HepG2 (cell line): ENCODE measurements at regions of chr14 and their contacts with region 1.

Region 1: DNA sequence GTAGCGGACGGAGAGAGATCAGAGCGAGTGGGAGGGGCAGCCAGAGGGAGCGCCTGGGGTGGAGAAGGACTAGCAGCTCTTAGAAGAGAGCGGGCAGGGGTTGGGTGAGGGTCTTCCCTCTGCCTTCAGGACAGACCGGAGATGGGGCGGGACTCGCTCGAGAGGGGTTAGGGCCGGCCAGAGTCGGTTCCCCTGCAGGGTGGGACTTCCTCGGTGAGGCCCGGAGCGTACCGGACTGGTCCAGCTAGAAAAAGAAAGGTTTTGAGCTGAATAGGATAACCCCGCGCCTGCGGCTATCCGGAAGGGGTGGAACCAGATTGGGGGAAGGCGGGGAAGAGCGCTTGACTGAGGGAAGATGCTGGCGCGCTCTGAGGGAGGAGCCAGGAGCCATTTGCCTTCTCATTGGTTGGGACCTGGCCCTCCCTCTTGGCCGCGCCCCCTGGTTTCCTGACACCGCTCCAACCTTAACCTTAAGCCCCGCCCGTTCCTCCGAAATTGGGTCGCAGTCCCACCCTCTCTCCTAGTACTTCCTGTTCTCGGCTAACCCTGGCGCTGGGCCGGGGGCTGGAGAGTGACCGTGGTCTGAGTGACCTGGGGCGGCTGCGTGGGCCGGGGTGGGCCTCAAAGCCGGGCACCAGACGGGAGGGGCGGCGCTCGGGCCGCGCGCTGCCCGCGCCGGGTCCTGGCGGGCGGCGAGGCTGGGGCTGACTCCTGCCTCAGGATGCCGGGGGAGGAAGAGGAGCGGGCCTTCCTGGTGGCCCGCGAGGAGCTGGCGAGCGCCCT is at the start of gene RNF31:
- DNase-seq: peak; percentile 100
- ATAC-seq: peak; percentile 90
- H3K4me3 ChIP-seq: peak within 1 kb of the TSS; percentile 91 to 100 (median 96)
- H3K27ac ChIP-seq: peak within 1 kb of the TSS; percentile 76
- H3K4me1 ChIP-seq: peaks cover 59% of the 10 kb centered on the region
- H3K27me3 ChIP-seq: peaks cover 0 to 3% of the 10 kb centered on the region in 2 experiments; a peak in 1 of 5 replicates
- CTCF ChIP-seq: no peak; the same call in 1 of the 2 replicates
- EP300 ChIP-seq: no peak
- POLR2A ChIP-seq: peak in 1 of 2 experiments; percentile 67; a peak in 2 of 4 replicates
- RAD21 ChIP-seq: peak; percentile 39
- total RNA-seq, gene RNF31: 65.9 and 86.8 TPM in 2 replicates

Region 2: GRCh38 chr14:23640524-23641141 is 506.5 kb before region 1 on chr14:
- CTCF ChIA-PET with region 1: no interaction called
- POLR2A ChIA-PET with region 1: interaction called, 10 read pairs
- in situ Hi-C with region 1: no loop called
- intact Hi-C with region 1: no loop called
- DNase-seq: peak; percentile 54
- ATAC-seq: no peak
- H3K4me3 ChIP-seq: peak overlapping the region in 1 of 3 experiments; percentile 74; a peak in 1 of 6 replicates
- H3K27ac ChIP-seq: peak overlapping the region; percentile 59
- H3K4me1 ChIP-seq: peaks cover 65% of the 10 kb centered on the region
- H3K27me3 ChIP-seq: no peaks in the 10 kb centered on the region; a peak in 1 of 5 replicates
- CTCF ChIP-seq: no peak
- EP300 ChIP-seq: no peak
- POLR2A ChIP-seq: peak in 1 of 2 experiments; percentile 77; a peak in 2 of 4 replicates
- RAD21 ChIP-seq: no peak

Region 3: GRCh38 chr14:24071144-24071697 is 75.9 kb before region 1 on chr14 and contains the start of gene CPNE6:
- CTCF ChIA-PET with region 1: no interaction called
- POLR2A ChIA-PET with region 1: no interaction called
- in situ Hi-C with region 1: no loop called
- intact Hi-C with region 1: no loop called
- DNase-seq: no peak
- ATAC-seq: no peak
- H3K4me3 ChIP-seq: no peak within 1 kb of the TSS
- H3K27ac ChIP-seq: no peak within 1 kb of the TSS
- H3K4me1 ChIP-seq: peaks cover 55% of the 10 kb centered on the region
- H3K27me3 ChIP-seq: peaks cover 13 to 56% of the 10 kb centered on the region in 2 experiments; a peak in 4 of 5 replicates
- CTCF ChIP-seq: no peak
- EP300 ChIP-seq: no peak
- POLR2A ChIP-seq: no peak
- RAD21 ChIP-seq: no peak
- total RNA-seq, gene CPNE6: not detected in 2 replicates

Region 4: DNA sequence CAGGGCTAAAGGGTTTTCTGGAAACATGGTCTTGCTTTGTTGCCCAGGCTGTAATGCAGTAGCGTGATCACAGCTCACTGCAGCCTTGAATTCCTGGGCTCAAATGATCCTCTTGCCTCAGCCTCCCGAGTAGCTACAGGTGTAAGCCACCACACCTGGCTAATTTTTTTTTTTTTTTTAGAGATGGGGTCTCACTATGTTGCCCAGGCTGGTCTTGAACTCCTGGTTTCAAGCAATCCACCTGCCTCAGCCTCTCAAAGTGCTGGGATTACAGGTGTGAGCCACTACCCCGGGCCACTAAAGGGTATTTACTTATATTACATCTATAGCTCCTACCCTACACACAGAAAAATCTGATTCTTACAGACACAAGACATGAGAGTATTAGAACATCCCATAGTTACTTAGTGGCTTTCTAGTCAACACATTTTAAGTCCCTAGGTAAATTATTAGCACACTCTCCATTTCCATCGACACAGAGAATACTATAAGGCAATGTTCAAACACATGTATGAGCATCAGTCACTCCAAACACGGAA is 38.8 kb before region 1 on chr14:
- CTCF ChIA-PET with region 1: no interaction called
- POLR2A ChIA-PET with region 1: interaction called, 977 read pairs
- in situ Hi-C with region 1: no loop called
- intact Hi-C with region 1: no loop called
- DNase-seq: no peak
- ATAC-seq: no peak
- H3K4me3 ChIP-seq: no peak overlapping the region
- H3K27ac ChIP-seq: no peak overlapping the region
- H3K4me1 ChIP-seq: peaks cover 60% of the 10 kb centered on the region
- H3K27me3 ChIP-seq: no peaks in the 10 kb centered on the region
- CTCF ChIP-seq: no peak
- EP300 ChIP-seq: no peak
- POLR2A ChIP-seq: no peak
- RAD21 ChIP-seq: no peak

Region 5: GRCh38 chr14:24171422-24172260 is 24.5 kb after region 1 on chr14 and contains the start of gene REC8:
- CTCF ChIA-PET with region 1: no interaction called
- POLR2A ChIA-PET with region 1: interaction called, 13 read pairs
- in situ Hi-C with region 1: no loop called
- intact Hi-C with region 1: no loop called
- DNase-seq: no peak
- ATAC-seq: peak; percentile 15
- H3K4me3 ChIP-seq: no peak within 1 kb of the TSS
- H3K27ac ChIP-seq: no peak within 1 kb of the TSS
- H3K4me1 ChIP-seq: no peaks in the 10 kb centered on the region
- H3K27me3 ChIP-seq: no peaks in the 10 kb centered on the region
- CTCF ChIP-seq: no peak
- EP300 ChIP-seq: no peak
- POLR2A ChIP-seq: peak in 1 of 2 experiments; percentile 16; a peak in 1 of 4 replicates
- RAD21 ChIP-seq: no peak
- total RNA-seq, gene REC8: 3.4 TPM in 1 of 2 replicates, not detected in the other

Region 6: GRCh38 chr14:24195191-24196070 is 48.3 kb after region 1 on chr14 and contains the start of gene TM9SF1:
- CTCF ChIA-PET with region 1: no interaction called
- POLR2A ChIA-PET with region 1: interaction called, 38 read pairs
- in situ Hi-C with region 1: no loop called
- intact Hi-C with region 1: no loop called
- DNase-seq: peak; percentile 93
- ATAC-seq: peak; percentile 94
- H3K4me3 ChIP-seq: peak within 1 kb of the TSS; percentile 79 to 91 (median 85)
- H3K27ac ChIP-seq: peak within 1 kb of the TSS; percentile 84
- H3K4me1 ChIP-seq: peaks cover 65% of the 10 kb centered on the region
- H3K27me3 ChIP-seq: no peaks in the 10 kb centered on the region; a peak in 1 of 5 replicates
- CTCF ChIP-seq: peak; percentile 54
- EP300 ChIP-seq: peak; percentile 7 to 39; a peak in 1 of 4 replicates
- POLR2A ChIP-seq: peak in 1 of 2 experiments; percentile 81; a peak in 2 of 4 replicates
- RAD21 ChIP-seq: peak; percentile 52
- total RNA-seq, gene TM9SF1: 56.4 and 110 TPM in 2 replicates

Region 7: DNA sequence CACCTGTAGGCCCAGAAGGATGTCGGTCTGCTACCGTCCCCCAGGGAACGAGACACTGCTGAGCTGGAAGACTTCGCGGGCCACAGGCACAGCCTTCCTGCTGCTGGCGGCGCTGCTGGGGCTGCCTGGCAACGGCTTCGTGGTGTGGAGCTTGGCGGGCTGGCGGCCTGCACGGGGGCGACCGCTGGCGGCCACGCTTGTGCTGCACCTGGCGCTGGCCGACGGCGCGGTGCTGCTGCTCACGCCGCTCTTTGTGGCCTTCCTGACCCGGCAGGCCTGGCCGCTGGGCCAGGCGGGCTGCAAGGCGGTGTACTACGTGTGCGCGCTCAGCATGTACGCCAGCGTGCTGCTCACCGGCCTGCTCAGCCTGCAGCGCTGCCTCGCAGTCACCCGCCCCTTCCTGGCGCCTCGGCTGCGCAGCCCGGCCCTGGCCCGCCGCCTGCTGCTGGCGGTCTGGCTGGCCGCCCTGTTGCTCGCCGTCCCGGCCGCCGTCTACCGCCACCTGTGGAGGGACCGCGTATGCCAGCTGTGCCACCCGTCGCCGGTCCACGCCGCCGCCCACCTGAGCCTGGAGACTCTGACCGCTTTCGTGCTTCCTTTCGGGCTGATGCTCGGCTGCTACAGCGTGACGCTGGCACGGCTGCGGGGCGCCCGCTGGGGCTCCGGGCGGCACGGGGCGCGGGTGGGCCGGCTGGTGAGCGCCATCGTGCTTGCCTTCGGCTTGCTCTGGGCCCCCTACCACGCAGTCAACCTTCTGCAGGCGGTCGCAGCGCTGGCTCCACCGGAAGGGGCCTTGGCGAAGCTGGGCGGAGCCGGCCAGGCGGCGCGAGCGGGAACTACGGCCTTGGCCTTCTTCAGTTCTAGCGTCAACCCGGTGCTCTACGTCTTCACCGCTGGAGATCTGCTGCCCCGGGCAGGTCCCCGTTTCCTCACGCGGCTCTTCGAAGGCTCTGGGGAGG is 163.8 kb after region 1 on chr14 and contains the start of gene LTB4R:
- CTCF ChIA-PET with region 1: no interaction called
- POLR2A ChIA-PET with region 1: interaction called, 30 read pairs
- in situ Hi-C with region 1: no loop called
- intact Hi-C with region 1: no loop called
- DNase-seq: no peak
- ATAC-seq: no peak
- H3K4me3 ChIP-seq: no peak within 1 kb of the TSS
- H3K27ac ChIP-seq: peak within 1 kb of the TSS; percentile 4
- H3K4me1 ChIP-seq: peaks cover 61% of the 10 kb centered on the region
- H3K27me3 ChIP-seq: no peaks in the 10 kb centered on the region; a peak in 1 of 5 replicates
- CTCF ChIP-seq: no peak
- EP300 ChIP-seq: no peak
- POLR2A ChIP-seq: no peak
- RAD21 ChIP-seq: no peak
- total RNA-seq, gene LTB4R: 1.00 and 3.2 TPM in 2 replicates